ENCODE measurements at regions of chr16 and their contacts with region 1.

Region 1: DNA sequence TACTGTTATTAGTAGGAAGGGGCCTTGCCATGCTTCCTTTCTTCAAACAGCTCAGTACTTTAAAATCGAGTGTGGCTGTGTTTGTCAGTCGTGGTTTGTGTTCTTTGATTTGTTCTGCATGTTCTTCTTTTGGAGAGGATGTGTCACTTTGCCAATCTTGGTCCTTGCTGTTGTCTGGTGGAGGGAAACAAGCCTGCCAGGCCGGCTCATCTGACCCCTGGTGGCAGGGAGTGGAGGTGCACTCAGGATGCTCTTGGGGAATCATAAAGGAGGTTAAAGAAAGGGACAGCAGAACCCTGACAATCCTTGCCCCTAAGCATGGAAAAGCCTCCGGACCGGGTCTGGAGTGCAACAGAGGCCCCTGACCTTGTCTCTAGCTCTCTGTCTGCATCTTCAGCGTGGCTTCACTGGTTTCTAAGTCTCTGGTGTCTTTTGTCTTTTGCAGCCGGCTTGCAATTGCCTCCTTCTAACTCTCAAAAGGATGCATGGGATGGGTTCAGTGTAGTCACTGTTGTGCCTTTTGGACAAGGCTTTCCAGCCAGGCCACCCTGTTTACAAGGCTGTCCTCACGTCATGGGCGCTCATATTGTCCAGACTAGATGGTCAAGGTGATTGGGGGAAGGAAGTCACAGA is 135.8 kb downstream of the WWOX start:
- DNase-seq: peak; percentile 65 to 78
- H3K4me3 ChIP-seq: no peak overlapping the region
- H3K27ac ChIP-seq: no peak overlapping the region
- H3K4me1 ChIP-seq: peaks cover 21 to 27% of the 10 kb centered on the region in 2 donors
- H3K27me3 ChIP-seq: no peaks in the 10 kb centered on the region
- CTCF ChIP-seq: peak; percentile 64 to 93 (median 81)
- POLR2A ChIP-seq: no peak

Region 2: DNA sequence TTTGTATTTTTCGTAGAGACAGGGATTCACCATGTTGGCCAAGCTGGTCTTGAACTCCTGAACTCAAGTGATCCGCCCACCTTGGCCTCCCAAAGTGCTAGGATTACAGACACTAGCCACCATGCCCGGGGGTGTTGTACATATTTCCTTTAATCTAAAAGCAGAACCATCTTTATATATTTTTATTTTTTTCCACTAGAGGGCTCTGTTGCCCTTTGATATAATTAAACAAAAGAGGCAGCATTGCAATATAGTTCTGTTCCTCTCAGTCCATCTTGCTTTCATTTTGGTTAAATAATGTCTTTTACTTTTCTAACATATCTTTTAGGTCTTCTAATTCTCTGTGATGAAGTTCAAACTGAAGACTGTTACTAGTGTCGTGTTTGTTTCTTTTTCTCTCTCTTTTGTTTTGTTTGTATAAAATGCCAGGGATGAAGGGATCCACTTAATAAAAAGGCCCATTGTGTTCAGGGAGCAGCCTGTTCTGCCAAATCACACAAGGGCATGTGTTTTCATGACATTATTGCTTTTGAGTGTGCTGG is 112.4 kb before region 1 on chr16:
- intact Hi-C with region 1: loop called (anchors 10 kb)
- DNase-seq: peak; percentile 59 to 68
- H3K4me3 ChIP-seq: no peak overlapping the region
- H3K27ac ChIP-seq: peak overlapping the region; percentile 85 to 93 (median 86)
- H3K4me1 ChIP-seq: peaks cover 23 to 29% of the 10 kb centered on the region in 2 donors
- H3K27me3 ChIP-seq: no peaks in the 10 kb centered on the region
- CTCF ChIP-seq: peak in 5 of 6 experiments; percentile 37 to 84 (median 46)
- POLR2A ChIP-seq: no peak